Cardiac septum (tissue), 1 donor: ENCODE measurements at regions of chr14 and their contacts with region 1.

Region 1: GRCh38 chr14:35404449-35405303 is at the start of gene NFKBIA:
- DNase-seq: peak; percentile 96
- total RNA-seq, gene NFKBIA: 42.7 TPM

Region 2: DNA sequence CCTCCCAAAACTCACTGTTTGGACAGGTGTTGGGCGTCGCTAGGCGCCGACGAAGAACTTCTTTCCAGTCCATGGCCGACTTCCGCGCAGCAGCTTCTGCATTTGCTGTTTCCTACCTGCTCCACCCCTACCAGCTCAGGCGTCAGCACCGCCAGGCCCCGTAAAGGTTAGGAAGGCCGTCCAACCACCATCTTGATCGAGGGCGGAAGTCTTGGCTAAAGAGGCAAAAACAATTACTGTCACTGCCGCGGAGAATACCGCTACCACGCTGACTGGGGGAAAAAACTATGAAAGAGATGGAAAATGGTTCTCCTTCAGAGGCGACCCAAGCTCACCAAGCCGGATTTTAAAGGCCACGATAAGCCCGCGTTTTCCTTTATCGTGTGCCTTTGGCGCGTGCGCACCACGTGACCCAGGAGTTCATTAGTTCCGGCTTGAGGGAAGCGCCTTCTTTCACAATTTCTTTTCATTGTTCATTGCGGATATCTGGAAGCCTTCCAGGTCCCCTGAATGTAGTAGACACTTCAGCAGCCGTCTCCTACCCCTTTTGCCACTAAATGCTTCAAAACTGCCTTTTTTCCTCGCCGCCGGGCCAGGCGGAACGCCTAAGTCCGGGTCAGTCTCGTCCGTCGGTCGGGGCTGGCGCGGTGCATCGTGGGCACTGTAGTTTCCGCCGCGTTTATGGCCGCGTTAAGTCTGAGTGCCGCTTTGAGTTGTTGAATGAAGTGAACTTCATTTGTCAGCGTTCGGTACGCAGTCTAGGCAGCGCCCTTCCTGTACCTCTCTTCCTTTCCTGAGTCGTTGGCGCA is 282.6 kb before region 1 on chr14 and contains the starts of genes PPP2R3C and PRORP:
- intact Hi-C with region 1: loop called (anchors 1 kb)
- DNase-seq: peak; percentile 96
- total RNA-seq, gene PPP2R3C: 26.1 TPM
- total RNA-seq, gene PRORP: 19.6 TPM

Region 3: DNA sequence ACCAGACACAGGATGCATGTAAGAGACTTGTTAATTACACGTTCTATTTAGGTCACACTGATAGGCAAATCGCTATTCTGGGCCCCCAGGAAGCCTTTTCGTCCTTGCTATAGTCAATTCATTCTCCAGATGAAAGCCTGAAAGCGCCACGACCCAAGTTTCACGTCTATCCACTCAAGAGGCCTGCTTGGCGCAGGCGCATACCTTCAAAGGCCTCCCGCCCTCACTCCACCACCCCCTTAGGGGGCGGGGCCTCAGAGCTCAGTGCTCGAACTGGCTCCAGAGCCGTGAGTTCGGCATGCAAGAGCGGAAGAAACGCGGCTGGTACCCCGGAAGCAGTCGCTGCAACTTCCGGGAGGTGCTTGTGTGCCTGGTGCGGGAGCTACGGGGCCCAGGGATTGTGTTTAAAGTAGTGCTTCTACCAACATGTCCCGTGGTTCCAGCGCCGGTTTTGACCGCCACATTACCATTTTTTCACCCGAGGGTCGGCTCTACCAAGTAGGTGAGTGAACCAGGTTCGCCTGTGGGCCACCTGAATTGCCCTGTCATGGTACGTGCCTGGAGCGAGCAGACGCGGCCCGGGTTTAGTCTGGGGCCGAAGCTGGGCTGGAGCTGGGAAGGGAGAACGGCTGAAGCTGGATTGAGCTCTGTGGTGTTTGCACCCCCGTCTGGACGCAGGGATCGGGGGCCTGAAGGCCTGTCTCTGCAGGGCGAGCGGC is 112.5 kb before region 1 on chr14 and contains the start of gene PSMA6:
- intact Hi-C with region 1: loop called (anchors 1 kb)
- DNase-seq: peak; percentile 99
- total RNA-seq, gene PSMA6: 125 TPM

Region 4: DNA sequence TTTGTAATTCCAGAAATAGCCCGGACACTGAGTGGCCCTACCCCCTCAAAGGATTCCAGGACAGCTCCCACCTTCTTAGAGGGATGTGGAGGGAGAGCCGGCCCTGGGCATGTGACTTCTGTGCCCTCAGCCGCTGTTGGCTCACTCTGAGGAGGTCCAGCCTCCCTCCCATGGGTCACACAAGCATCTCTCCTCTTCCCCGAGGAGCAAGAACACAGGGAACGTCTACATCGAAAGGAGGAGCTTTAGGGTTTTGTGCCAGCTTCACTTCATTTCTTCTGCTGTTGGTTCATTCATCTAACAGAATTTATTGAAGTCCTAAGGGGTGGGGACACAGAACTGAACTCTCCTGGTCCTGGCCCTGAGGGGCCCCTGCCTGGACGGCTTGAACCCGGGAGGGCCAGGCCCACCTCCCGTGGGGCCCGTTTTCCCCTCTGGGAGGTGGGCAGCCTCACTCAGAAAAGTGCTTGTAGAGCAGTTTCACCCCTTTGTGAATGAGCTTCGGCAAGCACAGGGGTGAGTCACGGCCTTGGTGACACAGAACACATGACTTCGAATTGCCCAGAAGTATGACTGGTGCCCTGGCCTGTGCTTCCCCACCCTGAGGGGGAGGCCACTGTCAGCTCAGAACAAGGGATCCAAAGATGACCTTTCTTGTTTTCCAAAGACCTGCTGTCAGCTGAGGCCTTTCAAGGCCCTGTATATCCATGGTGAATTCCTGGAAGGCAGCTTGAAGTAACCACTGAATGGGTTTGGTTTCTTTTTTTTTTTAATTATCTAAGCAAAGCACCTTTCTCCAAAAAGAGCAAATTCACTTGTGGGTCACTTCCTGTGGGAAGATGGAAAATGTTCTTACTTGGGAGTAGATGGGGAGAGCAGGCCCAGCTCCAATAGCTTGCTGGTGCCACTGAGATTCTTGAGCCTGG is 39.3 kb before region 1 on chr14:
- intact Hi-C with region 1: loop called (anchors 2 kb)
- DNase-seq: peak; percentile 86